GM18951 (cell line): ENCODE measurements at regions of chr14 and their contacts with region 1.

Region 1: GRCh38 chr14:87745507-87746118 is 247.4 kb downstream of the GALC start:
- POLR2A ChIP-seq: no peak

Region 2: GRCh38 chr14:87705439-87705896 is 40.1 kb before region 1 on chr14:
- in situ Hi-C with region 1: no loop called
- POLR2A ChIP-seq: no peak

Region 3: DNA sequence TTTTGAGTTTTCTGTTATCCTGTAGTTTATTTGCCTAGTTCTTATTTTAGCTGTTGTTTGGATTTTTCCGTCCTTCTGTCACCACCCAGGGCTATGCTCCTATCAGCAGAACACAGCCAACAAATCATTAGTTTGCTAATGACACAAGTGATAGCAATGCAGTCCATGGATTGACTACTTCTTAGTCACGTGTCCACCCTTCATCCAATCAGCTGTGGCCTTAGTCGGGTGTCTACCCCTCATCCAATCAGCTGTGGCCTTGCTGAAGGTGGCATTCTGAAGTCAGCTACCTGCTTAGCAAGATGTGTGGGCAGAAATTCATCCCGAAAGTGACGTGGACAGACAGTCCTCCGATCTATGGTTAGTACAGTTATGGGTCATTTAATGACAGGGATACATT is 65.1 kb after region 1 on chr14:
- in situ Hi-C with region 1: no loop called
- POLR2A ChIP-seq: no peak

Region 4: GRCh38 chr14:87896393-87897380 is 151.1 kb after region 1 on chr14:
- in situ Hi-C with region 1: loop called (anchors 10 kb)
- POLR2A ChIP-seq: no peak

Region 5: GRCh38 chr14:87992718-87993628 is 247.4 kb after region 1 on chr14 and contains the start of gene GALC:
- in situ Hi-C with region 1: no loop called
- POLR2A ChIP-seq: peak; percentile 73